Ovary (tissue), 10 donors: ENCODE measurements at regions of chr3 and their contacts with region 1.

Region 1: GRCh38 chr3:48685602-48686511 is at the start of gene NCKIPSD:
- DNase-seq: peak; percentile 86 to 95 (median 91)
- H3K4me3 ChIP-seq: peak within 1 kb of the TSS; percentile 90
- H3K27ac ChIP-seq: peak within 1 kb of the TSS; percentile 47 to 67
- H3K4me1 ChIP-seq: peaks cover 10% of the 10 kb centered on the region
- H3K27me3 ChIP-seq: no peaks in the 10 kb centered on the region
- CTCF ChIP-seq: peak; percentile 91 to 93 (median 92)
- EP300 ChIP-seq: no peak
- POLR2A ChIP-seq: peak; percentile 90
- total RNA-seq, gene NCKIPSD: 30.5 to 58.6 (median 36.3) TPM

Region 2: DNA sequence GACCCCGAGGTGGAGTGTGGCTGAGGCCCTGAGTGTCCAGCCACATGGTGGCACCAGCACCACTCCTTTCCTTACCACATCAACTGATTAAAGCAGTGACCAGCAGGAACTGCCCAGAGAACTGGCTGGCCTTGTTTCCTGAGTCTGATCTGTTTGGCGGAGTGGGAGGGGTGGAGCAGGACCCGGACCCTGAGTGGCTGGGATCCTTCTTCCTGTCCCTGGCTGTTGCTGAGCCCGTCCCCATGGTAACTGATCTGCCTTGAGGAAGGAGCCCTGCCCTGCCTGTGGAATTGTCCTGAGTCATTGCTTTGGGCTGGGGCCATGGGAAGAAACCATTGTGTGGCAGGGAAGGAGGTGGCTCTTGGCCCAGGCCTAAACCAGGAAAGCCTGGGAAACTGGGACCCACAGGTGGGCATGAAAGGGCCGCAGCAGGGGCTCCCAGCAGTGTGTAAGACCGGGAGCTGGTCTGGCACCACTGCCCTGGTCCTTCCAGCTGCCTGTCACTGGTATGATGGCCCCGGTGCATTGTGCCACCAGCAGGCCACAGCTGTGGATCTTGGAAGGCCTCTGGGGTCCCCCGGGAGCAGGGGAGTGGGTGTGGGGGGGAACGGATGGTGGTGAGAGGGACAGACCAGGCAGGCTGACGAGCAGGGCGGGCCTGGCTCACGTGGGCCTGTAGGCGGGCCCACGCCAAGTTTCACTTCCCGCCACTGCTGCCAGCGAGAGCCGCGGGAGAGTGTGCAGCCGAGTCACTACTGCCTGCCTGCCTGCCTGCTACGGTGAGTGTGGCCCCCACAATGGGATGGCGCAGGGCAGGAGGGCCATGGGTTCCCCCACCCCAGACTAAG is 220.1 kb before region 1 on chr3:
- intact Hi-C with region 1: loop called in 1 of 4 experiments (anchors 10 kb)
- DNase-seq: peak; percentile 92 to 99 (median 94)
- H3K4me3 ChIP-seq: peak overlapping the region; percentile 48
- H3K27ac ChIP-seq: peak overlapping the region; percentile 98 to 100
- H3K4me1 ChIP-seq: peaks cover 22% of the 10 kb centered on the region
- H3K27me3 ChIP-seq: no peaks in the 10 kb centered on the region
- CTCF ChIP-seq: peak; percentile 23 to 80 (median 77)
- EP300 ChIP-seq: peak; percentile 21
- POLR2A ChIP-seq: peak; percentile 90

Region 3: GRCh38 chr3:48879307-48879993 is 193.6 kb after region 1 on chr3:
- intact Hi-C with region 1: no loop called
- DNase-seq: no peak
- H3K4me3 ChIP-seq: no peak overlapping the region
- H3K27ac ChIP-seq: no peak overlapping the region
- H3K4me1 ChIP-seq: no peaks in the 10 kb centered on the region
- H3K27me3 ChIP-seq: no peaks in the 10 kb centered on the region
- CTCF ChIP-seq: no peak
- EP300 ChIP-seq: no peak
- POLR2A ChIP-seq: no peak